H1 (cell line): ENCODE measurements at regions of chr4 and their contacts with region 1.

Region 1: DNA sequence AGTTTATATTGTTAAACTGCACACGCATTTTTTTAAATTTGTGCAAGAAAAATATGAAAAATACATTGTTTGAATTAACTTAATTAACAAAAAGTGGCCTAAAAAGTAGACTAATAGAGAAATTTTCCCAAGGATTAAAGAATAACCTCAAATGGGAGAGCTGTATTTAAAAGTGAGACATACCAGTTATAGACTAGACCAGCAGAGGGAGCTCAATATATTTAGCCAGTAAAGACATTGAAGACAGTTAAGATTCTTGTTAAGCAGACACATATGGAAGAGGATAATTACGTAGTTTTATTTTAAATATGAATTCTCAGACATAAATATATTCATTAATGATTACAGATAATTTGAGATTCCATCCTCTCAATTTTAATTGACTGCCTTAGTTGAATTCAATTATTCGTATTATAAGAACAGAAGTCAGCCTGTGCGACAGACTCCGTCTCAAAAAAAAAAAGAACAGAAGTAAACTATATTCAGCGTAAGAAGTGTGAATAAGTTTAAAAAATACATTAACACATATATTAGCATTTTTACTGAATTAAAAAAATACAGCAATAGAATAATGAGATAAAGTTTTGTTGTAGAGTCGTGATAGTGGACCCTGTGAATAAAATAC is 64.8 kb downstream of the GLRA3 start:
- DNase-seq: no peak
- H3K4me3 ChIP-seq: no peak overlapping the region
- H3K27ac ChIP-seq: no peak overlapping the region
- H3K4me1 ChIP-seq: no peaks in the 10 kb centered on the region
- H3K27me3 ChIP-seq: no peaks in the 10 kb centered on the region
- CTCF ChIP-seq: peak in 2 of 3 experiments; percentile 32 to 42; a peak in 2 of 4 replicates
- EP300 ChIP-seq: no peak
- POLR2A ChIP-seq: no peak
- RAD21 ChIP-seq: peak; percentile 62 to 67

Region 2: DNA sequence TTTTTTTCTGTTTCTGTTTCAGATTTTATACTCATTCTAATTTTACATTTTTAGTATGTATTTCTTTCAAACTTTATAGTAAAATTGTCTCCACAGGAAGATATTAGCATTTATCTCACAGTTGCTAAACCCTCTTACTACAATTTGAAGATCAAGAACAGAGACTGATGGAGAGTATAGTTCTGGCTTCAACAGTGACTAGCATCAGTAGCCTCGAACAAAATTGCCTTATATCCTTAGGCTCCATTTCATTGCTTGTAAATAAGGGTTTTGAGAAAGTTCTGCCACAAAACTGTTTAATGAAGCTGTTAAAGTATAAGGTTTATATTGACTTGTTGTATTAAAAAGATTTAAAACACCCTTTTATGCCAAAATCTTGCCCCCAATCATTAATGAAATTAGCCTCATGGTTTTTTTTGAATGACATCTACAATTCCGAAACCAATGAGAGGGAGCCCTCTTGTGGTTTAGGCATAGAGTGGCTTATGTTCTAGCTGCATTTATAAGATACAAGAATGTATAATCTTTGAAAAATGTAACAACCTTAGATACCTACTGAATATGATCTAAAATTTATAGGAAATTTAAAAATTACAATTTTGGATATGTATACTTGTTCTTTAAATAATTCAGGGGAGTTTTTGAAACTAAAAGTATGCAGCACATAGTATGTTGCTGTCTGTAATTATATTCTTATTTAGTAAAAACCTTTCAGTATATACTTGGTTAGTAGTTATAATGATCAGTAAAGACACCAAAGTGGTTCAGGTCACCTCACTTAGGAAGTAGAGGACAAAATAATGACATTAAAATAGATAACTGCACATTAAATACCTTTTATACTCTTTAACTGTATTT is 132.1 kb before region 1 on chr4:
- CTCF ChIA-PET with region 1: no interaction called
- POLR2A ChIA-PET with region 1: no interaction called
- DNase-seq: no peak
- H3K4me3 ChIP-seq: no peak overlapping the region
- H3K27ac ChIP-seq: no peak overlapping the region
- H3K4me1 ChIP-seq: no peaks in the 10 kb centered on the region
- H3K27me3 ChIP-seq: no peaks in the 10 kb centered on the region
- CTCF ChIP-seq: peak in 2 of 3 experiments; percentile 55 to 58; a peak in 2 of 4 replicates
- EP300 ChIP-seq: no peak
- POLR2A ChIP-seq: no peak
- RAD21 ChIP-seq: peak; percentile 84 to 88

Region 3: DNA sequence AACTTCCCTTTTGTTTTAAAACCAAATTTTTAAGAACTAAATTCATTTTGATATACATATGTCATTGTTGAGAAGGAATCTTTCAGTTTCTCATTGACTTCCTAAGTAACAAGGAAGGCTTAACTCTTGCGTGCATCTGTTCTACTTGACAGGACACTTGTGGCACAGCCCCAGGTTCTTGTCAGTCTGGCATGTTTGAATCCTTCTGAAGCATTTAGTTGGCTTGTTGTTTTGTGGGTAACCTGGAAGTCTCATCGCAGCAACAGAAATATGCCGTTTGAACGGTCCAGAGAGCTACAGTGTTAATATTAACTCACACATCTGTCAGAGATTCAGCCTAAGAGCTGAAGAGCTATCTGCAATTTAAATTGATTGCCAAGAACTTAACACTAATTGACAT is 11.2 kb before region 1 on chr4:
- CTCF ChIA-PET with region 1: interaction called, 13 read pairs
- POLR2A ChIA-PET with region 1: no interaction called
- DNase-seq: no peak
- H3K4me3 ChIP-seq: no peak overlapping the region
- H3K27ac ChIP-seq: no peak overlapping the region
- H3K4me1 ChIP-seq: peaks cover 0 to 3% (median 1%) of the 10 kb centered on the region in 4 experiments; a peak in 1 of 7 replicates
- H3K27me3 ChIP-seq: no peaks in the 10 kb centered on the region
- CTCF ChIP-seq: no peak
- EP300 ChIP-seq: no peak
- POLR2A ChIP-seq: no peak
- RAD21 ChIP-seq: no peak

Region 4: GRCh38 chr4:174828845-174829701 is 64.9 kb after region 1 on chr4 and contains the start of gene GLRA3:
- CTCF ChIA-PET with region 1: interaction called, 11 read pairs
- POLR2A ChIA-PET with region 1: no interaction called
- DNase-seq: peak; percentile 93 to 96
- H3K4me3 ChIP-seq: peak within 1 kb of the TSS; percentile 59 to 71 (median 66)
- H3K27ac ChIP-seq: peak within 1 kb of the TSS; percentile 24; the same call in 1 of the 2 replicates
- H3K4me1 ChIP-seq: peaks cover 0 to 2% (median 0%) of the 10 kb centered on the region in 4 experiments; a peak in 1 of 7 replicates
- H3K27me3 ChIP-seq: no peaks in the 10 kb centered on the region
- CTCF ChIP-seq: no peak
- EP300 ChIP-seq: no peak
- POLR2A ChIP-seq: peak in 1 of 2 experiments; percentile 71; a peak in 2 of 3 replicates
- RAD21 ChIP-seq: 0 out of 4 replicates have a peak, but pooled peaks of 1 of the 2 experiments have one; percentile 2
- total RNA-seq, gene GLRA3: not detected in 2 replicates

Region 5: DNA sequence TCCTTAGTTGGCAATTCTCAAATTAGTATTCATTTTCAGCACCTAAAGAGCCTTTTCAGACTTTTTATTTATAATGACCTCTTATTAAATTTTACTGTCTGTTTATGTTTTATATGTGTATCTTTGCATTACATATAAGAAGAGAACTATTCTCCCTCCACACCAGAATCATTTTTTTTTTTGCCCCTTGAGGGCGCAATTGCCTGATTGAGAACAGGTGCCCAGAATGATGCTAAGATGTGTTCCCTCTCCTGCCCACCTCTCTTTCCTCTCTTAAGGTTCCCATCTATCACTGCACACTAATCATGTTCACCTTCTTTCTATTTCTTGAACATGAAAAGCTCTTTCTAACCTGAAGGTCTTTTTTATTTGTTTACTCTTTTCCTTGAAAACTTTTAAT is 109.7 kb after region 1 on chr4:
- CTCF ChIA-PET with region 1: no interaction called
- POLR2A ChIA-PET with region 1: no interaction called
- DNase-seq: no peak
- H3K4me3 ChIP-seq: no peak overlapping the region
- H3K27ac ChIP-seq: no peak overlapping the region
- H3K4me1 ChIP-seq: no peaks in the 10 kb centered on the region
- H3K27me3 ChIP-seq: no peaks in the 10 kb centered on the region
- CTCF ChIP-seq: peak in 2 of 3 experiments; percentile 45 to 51; a peak in 3 of 4 replicates
- EP300 ChIP-seq: no peak
- POLR2A ChIP-seq: no peak
- RAD21 ChIP-seq: peak; percentile 74 to 76